PC-3 (cell line): ENCODE measurements at regions of chr6 and their contacts with region 1.

Region 1: GRCh38 chr6:99991955-99992354 is 2.1 kb downstream of the MCHR2 start:
- DNase-seq: no peak
- ATAC-seq: no peak
- H3K4me3 ChIP-seq: no peak overlapping the region
- H3K27ac ChIP-seq: no peak overlapping the region
- H3K4me1 ChIP-seq: no peaks in the 10 kb centered on the region
- H3K27me3 ChIP-seq: no peaks in the 10 kb centered on the region
- CTCF ChIP-seq: no peak

Region 2: GRCh38 chr6:99943846-99944245 is 48.1 kb before region 1 on chr6:
- CTCF ChIA-PET with region 1: no interaction called
- POLR2A ChIA-PET with region 1: interaction called, 25 read pairs
- intact Hi-C with region 1: no loop called
- DNase-seq: no peak
- ATAC-seq: no peak
- H3K4me3 ChIP-seq: no peak overlapping the region
- H3K27ac ChIP-seq: no peak overlapping the region
- H3K4me1 ChIP-seq: no peaks in the 10 kb centered on the region
- H3K27me3 ChIP-seq: 0 out of 2 replicates have a peak, but pooled peaks cover 3% of the 10 kb centered on the region
- CTCF ChIP-seq: no peak